Ovary (tissue), 10 donors: ENCODE measurements at regions of chr2 and their contacts with region 1.

Region 1: DNA sequence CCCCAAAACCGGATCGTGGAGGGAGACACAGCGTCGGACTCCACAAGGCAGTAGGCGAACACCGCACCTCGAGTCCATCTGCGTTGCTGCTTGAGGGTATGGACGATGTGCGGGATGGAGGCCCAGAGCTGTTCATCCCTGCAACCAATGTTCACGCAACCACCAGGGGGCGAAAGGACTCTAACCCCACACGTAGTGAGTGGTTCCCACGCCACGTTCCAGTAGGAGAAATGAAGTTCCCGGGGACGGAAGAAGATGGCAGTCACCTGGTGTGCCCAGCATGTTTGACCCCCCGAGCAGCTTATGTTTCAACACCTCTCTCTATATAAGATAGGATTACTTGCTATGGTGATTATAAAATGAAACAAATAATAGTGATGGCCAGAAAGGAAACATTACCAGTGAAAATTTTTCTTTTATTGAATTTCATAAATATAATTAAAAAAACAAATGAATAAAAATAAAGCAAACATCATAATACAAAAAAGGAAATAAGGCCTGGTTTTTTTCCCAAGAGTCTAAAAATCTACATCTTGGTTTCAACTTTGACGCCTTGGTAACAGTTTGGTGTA is 184.3 kb downstream of the SH3BP4 start:
- DNase-seq: peak; percentile 65 to 81 (median 77)
- H3K4me3 ChIP-seq: no peak overlapping the region
- H3K27ac ChIP-seq: no peak overlapping the region
- H3K4me1 ChIP-seq: no peaks in the 10 kb centered on the region
- H3K27me3 ChIP-seq: no peaks in the 10 kb centered on the region
- CTCF ChIP-seq: peak; percentile 19 to 42 (median 37)
- EP300 ChIP-seq: no peak
- POLR2A ChIP-seq: no peak

Region 2: GRCh38 chr2:235055891-235056516 is 80.1 kb before region 1 on chr2:
- intact Hi-C with region 1: no loop called
- DNase-seq: no peak
- H3K4me3 ChIP-seq: no peak overlapping the region
- H3K27ac ChIP-seq: no peak overlapping the region
- H3K4me1 ChIP-seq: no peaks in the 10 kb centered on the region
- H3K27me3 ChIP-seq: no peaks in the 10 kb centered on the region
- CTCF ChIP-seq: no peak
- EP300 ChIP-seq: no peak
- POLR2A ChIP-seq: no peak

Region 3: GRCh38 chr2:235286622-235287374 is 150.7 kb after region 1 on chr2:
- intact Hi-C with region 1: no loop called
- DNase-seq: no peak
- H3K4me3 ChIP-seq: no peak overlapping the region
- H3K27ac ChIP-seq: no peak overlapping the region
- H3K4me1 ChIP-seq: no peaks in the 10 kb centered on the region
- H3K27me3 ChIP-seq: no peaks in the 10 kb centered on the region
- CTCF ChIP-seq: no peak
- EP300 ChIP-seq: no peak
- POLR2A ChIP-seq: no peak

Region 4: GRCh38 chr2:235746257-235747084 is 610.4 kb after region 1 on chr2:
- intact Hi-C with region 1: loop called in 2 of 4 experiments (anchors 5 to 10 kb)
- DNase-seq: peak; percentile 41 to 78 (median 57)
- H3K4me3 ChIP-seq: no peak overlapping the region
- H3K27ac ChIP-seq: no peak overlapping the region
- H3K4me1 ChIP-seq: no peaks in the 10 kb centered on the region
- H3K27me3 ChIP-seq: no peaks in the 10 kb centered on the region
- CTCF ChIP-seq: peak; percentile 55 to 82 (median 69)
- EP300 ChIP-seq: no peak
- POLR2A ChIP-seq: no peak